Left cardiac atrium (tissue), 4 donors: ENCODE measurements at regions of chr5 and their contacts with region 1.

Region 1: DNA sequence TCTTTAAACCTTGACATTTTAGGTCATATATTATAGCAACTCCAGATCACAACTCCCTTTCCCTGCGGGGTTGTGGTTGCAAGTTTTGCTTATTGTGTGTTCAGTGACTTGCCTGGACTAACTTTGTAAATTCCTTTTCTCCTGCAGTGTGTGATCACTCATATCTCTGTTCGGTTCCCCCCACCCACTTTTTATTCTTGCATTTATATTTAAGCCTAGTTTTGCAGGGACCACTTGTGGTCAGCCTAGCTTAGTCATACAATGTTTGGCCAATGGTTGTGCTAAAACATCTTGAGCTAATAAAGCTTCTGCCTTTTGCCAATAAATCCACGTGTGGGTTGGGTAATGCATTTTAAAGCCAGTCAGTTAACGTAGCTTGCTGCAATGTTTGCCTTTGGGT is 146.5 kb upstream of the IRX4 start:
- DNase-seq: no peak
- ATAC-seq: peak; percentile 12 to 81

Region 2: GRCh38 chr5:1772634-1773033 is 256.6 kb before region 1 on chr5:
- intact Hi-C with region 1: loop called in 1 of 2 experiments (anchors 10 kb)
- DNase-seq: no peak
- ATAC-seq: no peak

Region 3: DNA sequence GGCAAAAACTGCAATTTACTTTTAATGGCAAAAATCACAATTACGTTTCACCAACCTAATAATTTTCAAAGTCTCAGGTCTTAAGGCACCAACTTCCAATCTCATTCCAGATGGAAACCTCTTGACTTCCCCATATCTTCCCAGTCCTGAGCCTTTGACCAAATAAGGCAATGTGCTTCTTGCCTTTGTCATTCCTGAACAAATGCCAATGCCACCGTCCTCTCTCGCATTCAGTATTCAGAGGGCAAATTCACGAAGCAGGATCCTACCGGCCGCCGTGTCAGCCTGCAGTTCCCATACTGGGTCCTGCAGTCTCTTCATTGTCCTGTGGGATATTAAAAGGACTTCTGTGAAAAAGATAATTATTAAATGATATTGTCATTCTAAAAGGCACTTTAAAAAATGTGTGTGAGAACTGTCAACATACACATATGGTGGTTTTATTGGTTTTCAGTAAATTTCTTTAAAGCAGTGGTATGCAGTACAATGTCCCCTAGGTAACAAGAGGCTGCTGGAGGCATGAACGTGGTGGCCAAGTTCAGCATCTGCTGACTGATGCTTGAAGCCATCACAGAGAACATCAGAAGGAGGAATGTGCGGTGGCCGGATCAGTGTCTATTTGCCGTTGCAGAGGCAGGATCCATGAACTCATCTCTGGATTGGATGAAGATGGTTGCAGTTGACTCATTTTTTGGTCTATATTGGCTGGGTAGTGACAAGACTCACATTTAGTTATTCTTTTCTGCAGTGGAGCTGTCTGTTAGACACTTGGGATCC is 45.1 kb before region 1 on chr5:
- intact Hi-C with region 1: no loop called
- DNase-seq: no peak
- ATAC-seq: no peak

Region 4: DNA sequence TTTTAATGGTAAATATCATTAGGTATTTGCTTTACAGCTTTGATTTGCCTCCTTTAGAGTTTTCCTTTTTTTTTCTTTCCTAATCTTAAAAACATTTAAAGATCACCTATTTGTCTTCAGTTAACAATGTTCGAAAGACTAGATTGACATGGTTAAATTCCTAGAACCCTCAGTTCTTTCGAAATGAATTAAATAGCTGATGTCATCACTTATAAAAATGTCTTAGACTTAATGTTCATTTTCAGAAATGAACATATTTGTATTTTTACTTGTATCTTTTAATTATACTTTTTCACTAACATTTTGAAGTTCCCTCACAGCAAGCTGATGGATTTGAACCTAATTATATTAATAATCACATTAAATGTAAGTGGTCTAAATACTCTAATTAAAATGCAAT is 58.8 kb after region 1 on chr5:
- intact Hi-C with region 1: no loop called
- DNase-seq: no peak
- ATAC-seq: no peak

Region 5: GRCh38 chr5:2320611-2321010 is 291.4 kb after region 1 on chr5:
- intact Hi-C with region 1: no loop called
- DNase-seq: no peak
- ATAC-seq: no peak